OCI-LY7 (cell line): ENCODE measurements at regions of chr22 and their contacts with region 1.

Region 1: DNA sequence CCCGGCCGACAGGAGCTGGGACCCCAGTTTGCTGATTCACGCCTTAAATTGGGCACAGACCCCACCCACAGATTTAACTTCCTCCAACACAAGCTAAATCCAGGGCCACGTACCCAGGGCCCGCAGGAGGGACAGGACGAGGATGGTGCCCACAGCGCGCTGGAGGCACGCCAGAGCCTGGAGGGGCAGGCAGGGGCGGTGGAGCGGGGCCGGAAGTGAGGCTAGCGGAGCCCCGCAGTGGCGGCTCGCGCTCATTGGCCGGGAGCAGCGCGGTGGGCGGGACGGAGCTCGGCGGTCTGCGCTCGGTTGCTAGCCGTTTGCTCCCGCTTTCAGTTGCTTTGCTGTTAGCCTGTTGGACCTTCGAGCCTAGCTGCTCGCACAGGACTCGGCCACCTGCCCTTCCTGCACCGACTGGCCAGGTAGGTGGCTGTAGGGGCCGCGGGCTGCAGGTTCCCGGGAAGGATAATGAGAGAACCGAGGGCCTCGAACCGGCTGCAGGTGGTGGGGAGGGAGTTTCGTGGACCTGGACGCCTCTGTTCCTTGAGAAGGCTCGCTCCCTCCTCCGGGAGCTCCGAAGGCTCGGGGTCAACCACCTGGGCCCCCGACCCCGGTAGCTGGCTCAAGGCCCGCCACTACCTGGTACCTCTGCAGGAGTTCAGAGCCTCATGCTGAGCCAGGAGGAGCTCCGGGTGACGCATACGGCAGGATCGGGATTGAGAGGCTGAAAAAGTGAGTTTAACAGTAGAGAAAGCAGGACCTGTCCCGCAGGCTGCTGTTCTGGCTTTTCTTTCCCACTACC is at the start of gene CCDC134:
- DNase-seq: peak; percentile 91
- H3K4me3 ChIP-seq: peak within 1 kb of the TSS; percentile 79
- H3K27ac ChIP-seq: peak within 1 kb of the TSS; percentile 37
- H3K4me1 ChIP-seq: peaks cover 39% of the 10 kb centered on the region
- CTCF ChIP-seq: no peak
- total RNA-seq, gene CCDC134: 21.7 and 23.8 TPM in 2 replicates

Region 2: DNA sequence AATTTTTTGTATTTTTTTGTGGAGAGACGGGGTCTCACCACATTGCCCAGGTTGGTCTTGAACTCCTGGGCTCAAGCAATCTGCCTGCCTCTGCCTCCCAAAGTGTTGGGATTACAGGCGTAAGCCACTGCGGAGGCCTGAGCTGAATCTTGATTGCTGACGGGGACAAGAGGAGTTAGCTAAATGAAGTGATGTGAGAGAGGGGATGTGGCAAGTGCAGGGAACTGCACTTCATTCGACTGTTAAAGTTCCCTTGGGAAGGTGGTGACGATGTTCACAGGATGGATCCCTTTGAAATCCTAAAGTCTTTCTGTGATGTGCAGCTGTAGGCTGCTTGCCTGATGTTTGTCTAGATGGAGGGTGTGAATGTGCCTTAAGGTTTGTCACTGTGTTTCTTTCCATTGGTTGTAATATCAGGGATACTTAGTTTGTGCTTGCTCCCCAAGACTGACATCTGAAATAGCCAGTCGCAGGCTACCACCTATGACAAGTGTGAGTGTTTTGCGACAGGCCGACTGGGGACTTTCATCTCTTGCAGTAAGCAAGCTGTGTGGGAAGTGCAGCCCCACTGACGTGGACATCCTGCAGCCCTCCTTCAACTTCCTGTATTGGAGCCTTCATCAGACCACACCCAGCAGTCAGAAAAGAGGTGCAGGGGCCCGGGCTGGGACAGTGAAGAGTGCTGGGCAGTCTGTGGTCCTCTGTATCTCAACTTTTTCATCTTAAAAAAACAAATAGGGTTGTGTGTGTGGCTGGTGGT is 19.6 kb before region 1 on chr22:
- CTCF ChIA-PET with region 1: interaction called, 7 read pairs
- POLR2A ChIA-PET with region 1: interaction called, 39 read pairs
- intact Hi-C with region 1: no loop called
- DNase-seq: peak; percentile 78
- H3K4me3 ChIP-seq: peak overlapping the region; percentile 22
- H3K27ac ChIP-seq: no peak overlapping the region
- H3K4me1 ChIP-seq: peaks cover 14% of the 10 kb centered on the region
- CTCF ChIP-seq: no peak

Region 3: GRCh38 chr22:41786418-41786817 is 14.1 kb before region 1 on chr22:
- CTCF ChIA-PET with region 1: interaction called, 7 read pairs
- POLR2A ChIA-PET with region 1: interaction called, 39 read pairs
- intact Hi-C with region 1: no loop called
- DNase-seq: no peak
- H3K4me3 ChIP-seq: no peak overlapping the region
- H3K27ac ChIP-seq: no peak overlapping the region
- H3K4me1 ChIP-seq: peaks cover 5% of the 10 kb centered on the region
- CTCF ChIP-seq: no peak